Gastrocnemius medialis (tissue), 4 donors: ENCODE measurements at regions of chr6 and their contacts with region 1.

Region 1: GRCh38 chr6:113858480-113859348 is 1.6 kb downstream of the MARCKS start:
- DNase-seq: peak; percentile 73 to 75
- ATAC-seq: peak; percentile 57 to 75
- H3K4me3 ChIP-seq: peak overlapping the region; percentile 70 to 94 (median 75)
- H3K27ac ChIP-seq: peak overlapping the region; percentile 83 to 93 (median 90)
- H3K4me1 ChIP-seq: peaks cover 0 to 10% of the 10 kb centered on the region in 2 donors
- H3K27me3 ChIP-seq: no peaks in the 10 kb centered on the region
- CTCF ChIP-seq: peak; percentile 87 to 100 (median 99)
- POLR2A ChIP-seq: peak; percentile 51 to 78

Region 2: GRCh38 chr6:113306552-113307145 is 552.1 kb before region 1 on chr6:
- in situ Hi-C with region 1: loop called in 3 of 4 experiments (anchors 5 to 25 kb)
- intact Hi-C with region 1: loop called (anchors 1 kb)
- DNase-seq: peak; percentile 16 to 40
- ATAC-seq: peak in 1 of 2 donors; percentile 90
- H3K4me3 ChIP-seq: no peak overlapping the region
- H3K27ac ChIP-seq: no peak overlapping the region
- H3K4me1 ChIP-seq: no peaks in the 10 kb centered on the region
- H3K27me3 ChIP-seq: no peaks in the 10 kb centered on the region
- CTCF ChIP-seq: peak in 4 of 5 experiments; percentile 60 to 71 (median 64)
- POLR2A ChIP-seq: no peak

Region 3: GRCh38 chr6:113591896-113592827 is 266.6 kb before region 1 on chr6:
- in situ Hi-C with region 1: no loop called
- intact Hi-C with region 1: loop called (anchors 10 kb)
- DNase-seq: no peak
- ATAC-seq: no peak
- H3K4me3 ChIP-seq: no peak overlapping the region
- H3K27ac ChIP-seq: no peak overlapping the region
- H3K4me1 ChIP-seq: peaks cover 7 to 9% of the 10 kb centered on the region in 2 donors
- H3K27me3 ChIP-seq: no peaks in the 10 kb centered on the region
- CTCF ChIP-seq: no peak
- POLR2A ChIP-seq: no peak

Region 4: GRCh38 chr6:113818578-113818977 is 40.1 kb before region 1 on chr6:
- in situ Hi-C with region 1: no loop called
- intact Hi-C with region 1: no loop called
- DNase-seq: no peak
- ATAC-seq: no peak
- H3K4me3 ChIP-seq: no peak overlapping the region
- H3K27ac ChIP-seq: no peak overlapping the region
- H3K4me1 ChIP-seq: no peaks in the 10 kb centered on the region
- H3K27me3 ChIP-seq: no peaks in the 10 kb centered on the region
- CTCF ChIP-seq: no peak
- POLR2A ChIP-seq: no peak

Region 5: DNA sequence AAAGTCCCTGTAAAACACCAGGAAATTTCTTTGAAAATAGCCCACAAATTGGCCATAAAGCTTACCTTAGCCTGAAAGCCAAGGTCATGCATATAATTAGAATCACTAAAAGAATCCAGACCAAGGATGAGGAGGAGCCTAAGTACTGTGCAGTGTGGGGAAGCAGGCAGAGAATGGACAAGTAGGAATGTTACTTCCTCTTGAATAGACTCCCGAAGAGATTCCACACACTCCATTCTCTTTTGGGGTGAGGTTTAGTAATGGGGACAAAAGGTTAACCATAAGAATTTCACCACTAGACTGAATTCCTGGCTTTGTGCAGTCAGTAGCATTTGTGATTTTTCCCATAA is 29.0 kb before region 1 on chr6:
- in situ Hi-C with region 1: no loop called
- intact Hi-C with region 1: loop called (anchors 1 kb)
- DNase-seq: no peak
- ATAC-seq: no peak
- H3K4me3 ChIP-seq: no peak overlapping the region
- H3K27ac ChIP-seq: peak overlapping the region in 2 of 4 donors; percentile 46 to 64
- H3K4me1 ChIP-seq: peaks cover 25 to 32% of the 10 kb centered on the region in 2 donors
- H3K27me3 ChIP-seq: no peaks in the 10 kb centered on the region
- CTCF ChIP-seq: no peak
- POLR2A ChIP-seq: no peak

Region 6: DNA sequence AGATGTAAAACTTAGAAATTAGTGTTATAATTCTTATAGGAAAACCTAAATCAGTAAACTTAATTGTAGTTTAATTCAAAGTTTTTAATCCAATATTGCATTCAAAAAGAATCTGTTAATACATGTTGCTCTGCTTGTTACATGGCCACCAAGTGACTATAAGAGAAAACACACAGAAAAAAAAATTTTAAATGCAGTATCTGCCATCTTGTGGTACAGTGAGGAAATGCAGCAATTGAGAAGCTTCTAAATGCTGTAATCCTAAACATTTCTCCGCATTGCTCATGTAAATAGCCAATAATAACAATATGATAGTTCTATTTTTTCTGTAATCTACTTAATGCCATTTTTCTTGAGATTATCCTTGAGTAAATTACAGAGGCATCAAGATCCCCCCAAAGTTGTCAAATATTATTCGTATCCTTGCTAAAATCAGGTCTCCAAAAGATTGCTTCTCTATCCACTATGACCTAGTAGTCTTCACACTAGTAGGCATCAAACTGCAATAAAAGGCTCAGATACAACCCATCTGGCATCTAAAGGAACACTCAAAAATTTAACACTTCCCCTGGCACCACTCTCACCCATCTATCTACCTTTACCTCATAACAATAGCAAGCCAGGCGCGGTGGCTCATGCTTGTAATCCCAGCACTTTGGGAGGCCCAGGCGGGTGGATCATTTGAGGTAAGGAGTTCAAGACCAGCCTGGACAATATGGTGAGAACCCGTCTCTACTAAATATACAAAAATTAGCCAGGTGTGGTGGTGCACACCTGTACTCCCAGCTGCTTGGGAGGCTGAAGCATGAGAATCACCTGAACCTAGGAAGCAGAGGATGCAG is 77.6 kb after region 1 on chr6:
- in situ Hi-C with region 1: no loop called
- intact Hi-C with region 1: no loop called
- DNase-seq: no peak
- ATAC-seq: no peak
- H3K4me3 ChIP-seq: no peak overlapping the region
- H3K27ac ChIP-seq: no peak overlapping the region
- H3K4me1 ChIP-seq: no peaks in the 10 kb centered on the region
- H3K27me3 ChIP-seq: no peaks in the 10 kb centered on the region
- CTCF ChIP-seq: peak; percentile 26 to 77 (median 73)
- POLR2A ChIP-seq: no peak